Heart left ventricle (tissue), 16 donors: ENCODE measurements at regions of chr12 and their contacts with region 1.

Region 1: DNA sequence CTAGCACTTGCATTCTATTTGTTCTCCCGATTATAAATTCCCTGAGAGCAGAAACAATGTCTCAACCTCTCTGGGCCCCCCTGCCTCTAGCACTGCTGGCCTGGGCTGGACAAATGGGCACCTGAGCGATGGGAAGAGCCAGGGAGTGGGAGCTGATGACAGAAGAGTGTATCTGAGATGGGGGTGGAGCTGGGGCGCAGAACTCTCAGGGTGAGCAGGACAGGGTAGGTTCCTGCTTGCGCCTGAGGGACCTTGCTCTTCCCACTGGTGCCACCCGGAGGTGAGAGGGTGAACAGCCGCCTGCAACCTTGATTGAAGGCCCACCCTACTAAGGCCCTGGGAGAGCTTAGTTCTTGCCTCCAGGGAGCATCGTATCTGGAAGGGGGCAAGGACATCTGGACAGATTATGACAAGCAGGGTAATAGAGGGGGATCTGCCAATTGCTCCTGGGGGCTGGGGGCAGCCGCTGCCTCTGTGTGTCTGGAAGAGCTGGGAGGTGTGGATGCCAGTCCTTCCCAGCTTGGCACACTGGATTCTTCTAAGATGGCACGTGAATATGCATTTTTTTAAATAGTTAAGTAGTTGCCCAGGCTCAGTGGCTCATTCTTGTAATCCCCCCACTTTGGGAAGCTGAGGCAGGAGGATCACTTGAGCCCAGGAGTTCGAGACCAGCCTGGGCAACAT is 43.0 kb upstream of the TSPAN9 start:
- DNase-seq: peak; percentile 62 to 74 (median 67)
- ATAC-seq: peak; percentile 63 to 86 (median 72)
- H3K4me3 ChIP-seq: no peak overlapping the region
- H3K27ac ChIP-seq: no peak overlapping the region
- H3K4me1 ChIP-seq: peaks cover 0 to 36% (median 17%) of the 10 kb centered on the region in 12 donors
- H3K27me3 ChIP-seq: no peaks in the 10 kb centered on the region
- CTCF ChIP-seq: peak; percentile 44 to 80 (median 71)
- POLR2A ChIP-seq: no peak

Region 2: DNA sequence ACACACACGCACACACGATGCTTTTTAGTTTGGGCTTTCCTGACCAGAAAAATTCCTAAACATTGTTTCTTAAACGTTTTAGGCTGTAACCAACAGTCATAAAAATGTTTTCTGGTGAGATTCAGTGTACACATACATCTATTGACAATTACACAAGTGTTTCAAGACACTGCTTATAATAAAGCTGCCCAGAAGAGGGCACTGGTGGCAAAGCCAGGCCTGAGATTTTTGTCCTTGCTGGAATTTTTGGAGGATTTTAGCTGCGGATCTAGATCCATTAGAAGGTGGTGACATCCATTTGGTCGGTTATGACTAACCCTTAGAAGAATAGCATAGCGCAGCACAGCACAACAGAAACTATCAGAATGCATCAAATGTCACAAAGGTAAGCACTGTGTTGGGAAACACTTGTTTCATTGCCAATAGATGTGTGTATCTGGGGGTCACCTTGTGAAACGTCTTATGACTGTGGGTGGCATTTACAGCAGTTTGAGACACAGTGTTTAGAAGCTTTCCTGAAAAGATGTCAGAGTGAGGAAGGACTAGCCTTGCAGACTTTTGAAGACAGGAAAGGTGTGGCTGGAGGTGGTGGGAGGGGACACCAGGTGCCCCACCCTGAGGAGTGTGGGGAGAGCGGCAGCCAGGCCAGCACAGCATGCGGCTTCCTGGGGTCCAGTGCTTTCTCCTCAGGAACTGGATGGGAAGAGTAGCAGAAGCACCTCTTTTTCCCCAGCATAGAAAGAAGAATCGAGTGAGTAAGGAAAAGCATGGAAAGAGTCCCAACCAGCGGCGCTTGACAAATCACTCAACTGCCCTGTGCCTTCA is 294.2 kb before region 1 on chr12:
- intact Hi-C with region 1: loop called in 1 of 10 experiments (anchors 10 kb)
- DNase-seq: no peak
- ATAC-seq: no peak
- H3K4me3 ChIP-seq: no peak overlapping the region
- H3K27ac ChIP-seq: no peak overlapping the region
- H3K4me1 ChIP-seq: no peaks in the 10 kb centered on the region
- H3K27me3 ChIP-seq: peaks cover 0 to 3% (median 0%) of the 10 kb centered on the region in 9 donors
- CTCF ChIP-seq: peak; percentile 30 to 62 (median 50)
- POLR2A ChIP-seq: no peak

Region 3: DNA sequence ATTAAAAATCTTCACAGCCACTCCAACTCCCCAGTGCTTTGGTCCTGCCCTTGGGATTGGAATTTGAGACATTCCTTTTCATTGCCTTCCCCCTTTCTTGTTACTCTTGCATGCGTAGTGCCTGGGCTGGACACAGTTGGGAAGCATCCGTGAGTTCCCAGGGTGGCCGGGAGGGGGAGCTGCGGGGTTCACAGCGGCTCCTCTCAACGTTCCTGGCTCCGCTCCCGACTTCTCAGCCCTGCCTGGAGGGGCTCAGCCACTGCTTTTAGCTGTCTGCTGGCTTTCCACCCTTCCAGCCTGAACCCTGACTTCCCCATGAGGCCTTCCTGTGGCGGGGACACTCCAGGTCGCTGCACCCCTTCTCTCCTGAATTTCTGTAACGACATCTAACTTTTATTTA is 180.6 kb before region 1 on chr12:
- intact Hi-C with region 1: loop called in 8 of 10 experiments (anchors 5 to 10 kb)
- DNase-seq: peak; percentile 84 to 90 (median 85)
- ATAC-seq: peak; percentile 68 to 95 (median 90)
- H3K4me3 ChIP-seq: no peak overlapping the region
- H3K27ac ChIP-seq: no peak overlapping the region
- H3K4me1 ChIP-seq: peaks cover 0 to 3% (median 0%) of the 10 kb centered on the region in 12 donors
- H3K27me3 ChIP-seq: no peaks in the 10 kb centered on the region
- CTCF ChIP-seq: peak; percentile 72 to 92 (median 81)
- POLR2A ChIP-seq: no peak

Region 4: DNA sequence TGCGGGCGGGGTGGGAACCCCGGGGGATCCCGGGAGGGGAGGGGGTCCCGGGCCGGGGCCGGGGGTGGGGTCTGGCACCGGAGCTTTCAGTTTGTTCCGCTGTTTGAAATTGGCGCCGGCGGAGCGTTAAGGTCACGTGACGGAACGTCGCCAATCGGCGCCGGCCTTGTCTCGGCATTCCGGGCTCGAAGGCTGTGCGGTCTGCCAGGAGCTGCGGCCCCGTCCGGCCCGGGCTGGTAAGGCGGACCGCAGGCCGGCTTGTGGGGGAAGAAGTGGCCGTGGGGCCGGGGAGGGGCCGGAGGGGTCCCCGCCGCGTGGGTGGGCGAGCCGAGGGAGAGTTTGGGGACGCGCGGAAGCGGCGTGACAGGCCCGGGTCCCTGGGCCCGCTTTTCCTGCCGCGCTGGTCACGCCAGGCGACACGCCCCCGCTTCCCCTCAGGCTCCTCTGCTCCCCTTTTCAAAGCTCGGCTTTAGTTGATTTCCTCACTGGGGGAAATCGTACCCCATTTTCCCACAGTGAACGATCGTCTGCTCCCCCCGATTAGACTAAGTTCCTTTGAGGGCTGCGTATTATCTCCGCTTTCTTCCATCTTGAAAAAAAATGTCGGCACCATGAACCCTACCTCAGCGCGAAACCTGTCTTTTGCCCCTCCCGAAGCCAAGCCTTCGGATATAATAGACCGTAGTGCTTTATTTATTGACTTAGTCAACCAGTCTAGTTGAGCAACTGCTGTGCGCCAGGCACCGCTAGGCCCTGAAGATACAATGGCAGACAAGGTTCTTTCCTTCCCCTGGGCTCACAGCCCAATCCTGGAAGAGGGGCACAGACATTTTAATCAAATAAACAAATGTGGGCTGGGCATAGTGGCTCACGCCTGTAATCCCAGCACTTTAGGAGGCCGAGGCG is 156.9 kb before region 1 on chr12 and contains the starts of genes FOXM1 and RHNO1:
- intact Hi-C with region 1: loop called in 2 of 10 experiments (anchors 10 kb)
- DNase-seq: peak; percentile 90 to 95 (median 91)
- ATAC-seq: peak; percentile 84 to 97 (median 96)
- H3K4me3 ChIP-seq: peak within 1 kb of the TSS; percentile 72 to 99 (median 86)
- H3K27ac ChIP-seq: peak within 1 kb of the TSS; percentile 31 to 93 (median 83)
- H3K4me1 ChIP-seq: peaks cover 0 to 33% (median 16%) of the 10 kb centered on the region in 12 donors
- H3K27me3 ChIP-seq: no peaks in the 10 kb centered on the region
- CTCF ChIP-seq: peak in 6 of 12 donors; percentile 8 to 43 (median 31)
- POLR2A ChIP-seq: peak in 1 of 2 donors; percentile 24
- total RNA-seq, gene FOXM1: 0.09 to 13.5 (median 0.68) TPM
- total RNA-seq, gene RHNO1: 3.1 to 15.0 (median 5.7) TPM

Region 5: DNA sequence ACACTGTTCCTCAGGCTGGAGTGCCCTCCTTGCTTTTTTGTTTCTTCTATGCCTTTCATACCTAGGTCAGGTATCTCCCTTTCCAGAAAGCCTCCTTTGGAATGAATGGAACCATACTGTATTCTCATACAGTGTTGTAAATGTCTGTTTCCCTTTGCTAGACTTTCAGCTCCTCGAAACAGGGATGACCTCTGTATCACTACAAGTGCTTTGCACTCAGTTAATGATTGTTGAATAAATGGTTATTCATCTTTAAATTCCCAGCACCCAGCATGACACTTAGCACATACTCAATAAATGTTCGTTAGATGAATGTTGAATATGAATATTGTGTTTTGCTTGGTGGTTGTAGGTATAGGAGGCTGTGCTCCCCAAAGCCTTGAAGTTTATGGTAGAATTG is 149.4 kb before region 1 on chr12:
- intact Hi-C with region 1: loop called (anchors 1 to 10 kb)
- DNase-seq: no peak
- ATAC-seq: no peak
- H3K4me3 ChIP-seq: no peak overlapping the region
- H3K27ac ChIP-seq: no peak overlapping the region
- H3K4me1 ChIP-seq: peaks cover 0 to 2% (median 0%) of the 10 kb centered on the region in 12 donors
- H3K27me3 ChIP-seq: no peaks in the 10 kb centered on the region
- CTCF ChIP-seq: no peak
- POLR2A ChIP-seq: no peak

Region 6: DNA sequence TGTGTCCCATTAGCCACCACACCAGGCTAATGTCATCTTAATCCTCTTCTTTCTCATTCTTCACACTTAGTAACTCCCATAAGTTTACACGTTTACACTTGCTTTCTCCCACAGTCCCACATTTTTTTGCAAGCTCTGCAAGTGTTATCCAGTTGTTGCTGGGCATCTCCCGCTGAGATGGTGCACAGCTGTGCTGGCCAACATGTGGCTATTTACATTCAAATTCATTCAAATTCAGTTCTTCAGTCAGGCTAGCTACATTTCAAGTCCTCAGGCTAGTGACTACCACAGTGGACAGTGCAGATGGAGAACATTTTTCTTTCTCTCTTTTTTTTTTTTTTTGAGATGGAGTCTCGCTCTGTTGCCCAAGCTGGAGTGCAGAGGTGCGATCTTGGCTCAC is 84.8 kb before region 1 on chr12:
- intact Hi-C with region 1: no loop called
- DNase-seq: no peak
- ATAC-seq: no peak
- H3K4me3 ChIP-seq: no peak overlapping the region
- H3K27ac ChIP-seq: no peak overlapping the region
- H3K4me1 ChIP-seq: peaks cover 0 to 6% (median 4%) of the 10 kb centered on the region in 12 donors
- H3K27me3 ChIP-seq: no peaks in the 10 kb centered on the region
- CTCF ChIP-seq: no peak
- POLR2A ChIP-seq: no peak

Region 7: GRCh38 chr12:2959505-2960389 is 74.5 kb before region 1 on chr12:
- intact Hi-C with region 1: loop called in 8 of 10 experiments (anchors 5 to 10 kb)
- DNase-seq: peak; percentile 44 to 86 (median 70)
- ATAC-seq: peak in 3 of 4 donors; percentile 29 to 74 (median 68)
- H3K4me3 ChIP-seq: peak overlapping the region; percentile 39 to 86 (median 66)
- H3K27ac ChIP-seq: peak overlapping the region; percentile 79 to 94 (median 85)
- H3K4me1 ChIP-seq: peaks cover 0 to 51% (median 21%) of the 10 kb centered on the region in 12 donors
- H3K27me3 ChIP-seq: peaks cover 0 to 25% (median 0%) of the 10 kb centered on the region in 9 donors
- CTCF ChIP-seq: peak in 2 of 12 donors; percentile 6 to 10
- POLR2A ChIP-seq: peak in 1 of 2 donors; percentile 43

Region 8: GRCh38 chr12:2998789-2999264 is 35.4 kb before region 1 on chr12:
- intact Hi-C with region 1: loop called in 1 of 10 experiments (anchors 5 kb)
- DNase-seq: peak; percentile 81 to 87 (median 82)
- ATAC-seq: peak; percentile 94 to 98 (median 98)
- H3K4me3 ChIP-seq: peak overlapping the region in 3 of 12 donors; percentile 11 to 35 (median 23)
- H3K27ac ChIP-seq: peak overlapping the region in 10 of 12 donors; percentile 9 to 87 (median 74)
- H3K4me1 ChIP-seq: peaks cover 0 to 22% (median 8%) of the 10 kb centered on the region in 12 donors
- H3K27me3 ChIP-seq: no peaks in the 10 kb centered on the region
- CTCF ChIP-seq: no peak
- POLR2A ChIP-seq: no peak